Stomach (tissue), 19 donors: ENCODE measurements at regions of chr18 and their contacts with region 1.

Region 1: DNA sequence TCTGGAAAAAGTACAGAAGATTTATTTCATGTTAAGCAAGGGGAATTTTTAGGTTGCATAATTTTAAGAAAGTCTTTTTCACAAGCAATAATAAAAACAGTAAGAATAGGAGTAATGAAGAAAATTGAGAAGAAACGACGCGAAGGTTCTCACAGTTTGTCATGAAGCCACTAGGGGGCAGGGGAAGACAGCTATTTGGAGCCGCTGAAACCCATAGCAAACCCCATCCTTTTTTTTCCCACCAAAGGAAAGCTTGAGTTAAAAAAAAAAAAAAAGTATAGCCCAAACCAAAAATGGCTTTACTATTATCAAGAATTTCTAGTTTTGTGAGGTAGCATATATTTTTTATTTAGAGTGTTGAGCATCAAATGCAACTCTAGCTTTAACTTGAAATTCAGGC is 300.9 kb downstream of the PHLPP1 start:
- DNase-seq: peak in 1 of 2 donors; percentile 87
- H3K4me3 ChIP-seq: no peak overlapping the region
- H3K27ac ChIP-seq: no peak overlapping the region
- H3K4me1 ChIP-seq: no peaks in the 10 kb centered on the region
- H3K27me3 ChIP-seq: peaks cover 0 to 21% (median 0%) of the 10 kb centered on the region in 3 donors
- CTCF ChIP-seq: peak in 5 of 7 experiments; percentile 49 to 79 (median 72)
- EP300 ChIP-seq: no peak
- POLR2A ChIP-seq: no peak

Region 2: DNA sequence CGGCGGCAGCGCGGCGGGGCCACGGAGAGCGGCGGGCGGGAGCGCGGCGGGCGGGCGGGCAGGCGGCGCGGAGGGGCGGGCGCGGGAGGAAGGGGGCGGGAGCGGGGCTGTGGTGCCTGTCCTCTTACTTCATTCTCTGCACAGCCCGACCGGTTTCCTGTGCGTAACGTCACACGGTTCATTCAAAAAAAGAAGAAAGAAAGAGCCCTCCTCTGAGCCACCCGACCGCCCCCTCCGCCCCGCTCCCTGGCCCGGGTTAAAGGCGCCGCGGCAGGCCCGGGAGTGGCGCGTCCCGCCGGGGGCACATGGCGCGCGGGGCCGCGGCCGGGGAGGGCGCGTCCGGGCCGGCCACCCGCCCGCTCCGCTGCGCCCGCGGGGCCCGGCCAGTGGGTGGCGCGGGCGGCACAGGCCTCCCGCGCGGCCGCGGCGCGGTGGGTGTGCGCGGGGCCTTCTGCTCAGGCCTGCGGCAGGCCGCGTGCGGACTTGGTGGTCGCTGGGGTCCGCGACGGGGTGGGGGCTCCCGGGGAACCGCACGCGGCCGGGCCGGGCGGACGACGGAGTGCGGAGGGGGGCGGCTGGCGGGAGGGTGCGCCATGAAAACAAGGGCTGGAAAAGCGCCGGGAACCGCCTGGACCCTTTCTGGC is 303.9 kb after region 1 on chr18:
- intact Hi-C with region 1: loop called (anchors 5 kb)
- DNase-seq: peak; percentile 75 to 95
- H3K4me3 ChIP-seq: peak overlapping the region; percentile 68 to 85 (median 70)
- H3K27ac ChIP-seq: peak overlapping the region; percentile 74 to 92 (median 85)
- H3K4me1 ChIP-seq: peaks cover 6 to 56% (median 44%) of the 10 kb centered on the region in 4 donors
- H3K27me3 ChIP-seq: peaks cover 0 to 22% (median 9%) of the 10 kb centered on the region in 3 donors
- CTCF ChIP-seq: no peak
- EP300 ChIP-seq: no peak
- POLR2A ChIP-seq: no peak

Region 3: GRCh38 chr18:63444567-63444966 is 428.3 kb after region 1 on chr18:
- intact Hi-C with region 1: loop called (anchors 5 kb)
- DNase-seq: peak in 1 of 2 donors; percentile 37
- H3K4me3 ChIP-seq: no peak overlapping the region
- H3K27ac ChIP-seq: peak overlapping the region in 1 of 5 donors; percentile 24
- H3K4me1 ChIP-seq: peaks cover 0 to under 1% (median under 1%) of the 10 kb centered on the region in 4 donors
- H3K27me3 ChIP-seq: no peaks in the 10 kb centered on the region
- CTCF ChIP-seq: no peak
- EP300 ChIP-seq: no peak
- POLR2A ChIP-seq: no peak